ENCODE measurements at regions of chr18 and their contacts with region 1.

Region 1: DNA sequence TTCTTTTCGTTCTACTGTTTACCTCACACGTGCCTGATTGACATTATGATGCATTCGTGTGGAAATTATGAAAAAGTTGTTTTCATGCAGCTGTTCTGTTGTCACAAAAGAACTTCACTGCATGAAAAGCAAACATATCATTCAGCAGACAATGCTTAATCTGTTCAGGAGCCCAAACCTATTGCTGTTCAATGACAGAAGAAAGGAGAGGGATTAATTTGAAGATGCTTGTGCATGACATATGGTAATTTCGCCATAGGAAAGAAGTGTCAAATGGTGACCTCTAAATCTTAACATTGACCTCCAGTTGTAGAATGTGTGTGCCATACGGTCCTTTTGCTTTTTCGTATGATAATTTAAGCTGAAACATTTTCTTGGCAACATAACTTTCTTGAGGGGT is 124.5 kb downstream of the WDR7 start:
- DNase-seq: no peak
- ATAC-seq: no peak
- H3K4me3 Mint-ChIP-seq: no peak overlapping the region
- H3K27ac Mint-ChIP-seq: no peak overlapping the region
- H3K4me1 Mint-ChIP-seq: no peaks in the 10 kb centered on the region
- H3K27me3 Mint-ChIP-seq: no peaks in the 10 kb centered on the region
- CTCF ChIP-seq: no peak

Region 2: DNA sequence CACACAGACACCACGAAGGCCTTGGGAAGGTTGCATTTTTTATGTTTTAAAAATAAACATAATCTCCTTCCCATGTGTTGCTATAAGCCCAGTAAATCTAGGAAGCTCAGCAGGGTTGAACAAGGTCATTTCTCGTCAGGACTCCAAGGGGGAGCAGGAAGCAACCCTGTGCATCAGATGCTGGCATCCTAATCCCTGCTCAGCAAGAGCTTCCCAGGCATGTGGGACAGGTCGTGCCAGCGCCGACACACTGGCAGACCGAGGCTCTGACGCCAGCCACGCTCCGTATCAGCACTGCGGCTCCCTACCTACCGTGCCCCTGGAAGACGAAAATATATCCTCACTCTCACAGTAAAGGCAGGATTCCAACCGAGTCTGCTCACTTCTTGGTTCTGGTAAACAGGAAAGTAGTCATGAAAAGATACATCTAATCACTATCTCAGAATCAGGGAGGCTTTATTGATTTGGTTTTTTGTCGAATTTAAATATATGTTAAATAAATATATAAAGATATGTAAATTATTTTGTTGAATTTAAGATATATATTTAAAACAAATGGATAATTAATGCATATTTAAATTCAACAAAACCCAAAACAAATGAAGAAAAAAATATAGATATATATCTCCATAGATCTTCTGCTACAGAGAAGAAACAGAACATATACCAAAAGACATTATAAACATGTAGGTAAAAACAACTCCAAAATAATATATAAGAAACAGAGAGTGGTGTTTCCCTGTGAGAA is 198.7 kb before region 1 on chr18:
- CTCF ChIA-PET with region 1: no interaction called
- POLR2A ChIA-PET with region 1: no interaction called
- intact Hi-C with region 1: no loop called
- DNase-seq: no peak
- ATAC-seq: no peak
- H3K4me3 Mint-ChIP-seq: no peak overlapping the region
- H3K27ac Mint-ChIP-seq: no peak overlapping the region
- H3K4me1 Mint-ChIP-seq: no peaks in the 10 kb centered on the region
- H3K27me3 Mint-ChIP-seq: peaks cover 5% of the 10 kb centered on the region
- CTCF ChIP-seq: no peak

Region 3: DNA sequence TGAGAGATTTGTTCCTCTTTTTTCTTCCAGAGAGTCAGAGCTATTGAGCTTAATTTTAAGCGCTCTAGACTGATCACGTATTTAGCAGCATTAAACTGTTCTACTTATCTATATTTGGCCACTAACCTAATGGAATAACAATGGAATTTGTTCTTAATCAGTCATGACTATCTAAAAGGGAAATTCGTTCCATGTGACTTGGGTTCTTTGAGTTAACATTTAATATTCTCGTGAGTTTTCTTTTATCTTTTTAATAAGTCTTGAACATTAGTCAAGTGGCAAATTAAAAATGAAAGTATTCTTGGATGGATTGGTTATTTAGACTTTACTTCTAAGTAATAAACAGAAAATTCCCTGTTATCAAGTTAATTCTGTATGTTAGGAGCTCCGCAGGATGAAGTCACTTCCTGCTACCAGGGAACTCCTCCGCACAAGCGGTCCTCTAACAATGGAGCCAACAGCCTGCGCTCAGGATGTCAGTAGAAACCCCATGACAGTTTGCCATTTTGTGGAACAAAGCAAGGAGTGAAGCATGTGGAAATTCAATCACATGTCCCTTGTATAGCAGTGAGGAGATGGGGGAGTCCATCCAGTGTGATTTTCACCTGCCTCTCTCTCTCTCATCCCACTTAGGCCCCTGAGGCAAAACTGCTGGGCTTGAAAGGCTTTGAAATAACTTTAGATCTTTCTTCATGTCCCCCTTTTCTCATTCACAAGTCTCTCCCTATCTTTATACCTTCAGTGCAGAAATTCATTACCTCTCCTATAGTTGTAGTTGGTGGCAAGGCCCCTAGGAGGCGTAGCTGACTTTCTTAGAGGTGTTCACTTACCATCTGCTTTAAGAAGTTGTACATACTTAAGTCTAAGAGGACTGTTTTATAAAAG is 13.5 kb after region 1 on chr18:
- CTCF ChIA-PET with region 1: interaction called, 14 read pairs
- POLR2A ChIA-PET with region 1: no interaction called
- intact Hi-C with region 1: no loop called
- DNase-seq: peak; percentile 67
- ATAC-seq: peak; percentile 77
- H3K4me3 Mint-ChIP-seq: no peak overlapping the region
- H3K27ac Mint-ChIP-seq: no peak overlapping the region
- H3K4me1 Mint-ChIP-seq: no peaks in the 10 kb centered on the region
- H3K27me3 Mint-ChIP-seq: no peaks in the 10 kb centered on the region
- CTCF ChIP-seq: peak; percentile 68